CD14-positive monocyte (primary cell): ENCODE measurements at regions of chr17 and their contacts with region 1.

Region 1: GRCh38 chr17:76296186-76296585 is 11.9 kb downstream of the QRICH2 start:
- DNase-seq: no peak
- H3K4me3 ChIP-seq: no peak overlapping the region
- H3K4me3 Mint-ChIP-seq: no peak overlapping the region
- H3K27ac ChIP-seq: no peak overlapping the region
- H3K27ac Mint-ChIP-seq: no peak overlapping the region
- H3K4me1 ChIP-seq: no peaks in the 10 kb centered on the region
- H3K4me1 Mint-ChIP-seq: peaks cover 1% of the 10 kb centered on the region
- H3K27me3 ChIP-seq: no peaks in the 10 kb centered on the region
- H3K27me3 Mint-ChIP-seq: peaks cover 0 to 5% (median 2%) of the 10 kb centered on the region in 3 donors
- CTCF ChIP-seq: no peak

Region 2: DNA sequence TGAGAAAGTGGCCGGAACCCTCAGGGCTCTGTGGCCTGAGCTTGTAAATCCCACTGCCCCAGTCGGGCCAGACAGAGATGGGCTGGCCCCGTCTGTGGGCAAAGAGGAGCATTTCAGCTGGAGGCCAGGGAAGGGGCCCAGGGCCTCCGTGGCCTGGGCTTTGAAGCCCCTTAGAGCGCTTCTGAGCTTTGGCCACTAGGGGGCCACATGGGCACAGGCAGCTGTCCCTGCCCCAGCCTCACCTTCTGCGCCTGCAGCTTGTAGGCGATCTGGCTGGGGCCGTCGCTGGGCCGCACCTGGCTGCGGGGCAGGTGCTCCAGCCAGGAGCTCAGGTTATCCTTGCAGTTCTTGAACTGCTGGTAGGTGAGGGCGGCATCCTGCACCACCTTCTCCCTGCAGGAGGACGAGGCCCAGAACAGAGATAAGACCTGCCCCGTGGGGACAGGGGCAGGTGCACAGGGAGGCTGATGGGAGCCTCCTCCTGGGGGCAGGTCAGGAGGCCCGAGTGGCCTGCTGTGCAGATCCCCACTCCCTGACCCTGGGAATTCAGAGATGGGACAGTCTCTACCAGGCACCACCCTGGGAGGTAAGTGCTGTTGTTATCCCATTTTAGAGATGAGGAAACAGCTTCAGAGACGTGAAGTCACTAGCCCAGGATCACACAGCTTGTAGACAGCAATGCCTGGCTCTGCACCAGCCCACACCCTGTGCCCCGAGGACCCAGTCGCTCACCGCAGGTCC is 281.8 kb before region 1 on chr17:
- intact Hi-C with region 1: loop called (anchors 2 to 5 kb)
- DNase-seq: peak; percentile 57 to 69 (median 69)
- H3K4me3 ChIP-seq: no peak overlapping the region
- H3K4me3 Mint-ChIP-seq: no peak overlapping the region
- H3K27ac ChIP-seq: no peak overlapping the region
- H3K27ac Mint-ChIP-seq: no peak overlapping the region
- H3K4me1 ChIP-seq: no peaks in the 10 kb centered on the region
- H3K4me1 Mint-ChIP-seq: peaks cover 1% of the 10 kb centered on the region
- H3K27me3 ChIP-seq: no peaks in the 10 kb centered on the region
- H3K27me3 Mint-ChIP-seq: peaks cover 0 to 5% (median 2%) of the 10 kb centered on the region in 3 donors
- CTCF ChIP-seq: peak; percentile 99

Region 3: GRCh38 chr17:76191896-76192295 is 104.3 kb before region 1 on chr17:
- intact Hi-C with region 1: no loop called
- DNase-seq: no peak
- H3K4me3 ChIP-seq: no peak overlapping the region
- H3K4me3 Mint-ChIP-seq: no peak overlapping the region
- H3K27ac ChIP-seq: no peak overlapping the region
- H3K27ac Mint-ChIP-seq: no peak overlapping the region
- H3K4me1 ChIP-seq: no peaks in the 10 kb centered on the region
- H3K4me1 Mint-ChIP-seq: peaks cover 9% of the 10 kb centered on the region
- H3K27me3 ChIP-seq: no peaks in the 10 kb centered on the region
- H3K27me3 Mint-ChIP-seq: peaks cover 8 to 17% (median 12%) of the 10 kb centered on the region in 3 donors
- CTCF ChIP-seq: no peak